B cell (primary cell): ENCODE measurements at regions of chr3 and their contacts with region 1.

Region 1: GRCh38 chr3:41961750-41962679 is at the start of gene ULK4:
- DNase-seq: peak; percentile 99
- ATAC-seq: peak; percentile 87
- H3K4me3 ChIP-seq: peak within 1 kb of the TSS; percentile 75 to 92 (median 88)
- H3K4me3 Mint-ChIP-seq: peak within 1 kb of the TSS; percentile 98
- H3K27ac ChIP-seq: peak within 1 kb of the TSS; percentile 90 to 99
- H3K27ac Mint-ChIP-seq: peak within 1 kb of the TSS; percentile 99
- H3K4me1 ChIP-seq: peaks cover 10 to 16% of the 10 kb centered on the region in 2 donors
- H3K4me1 Mint-ChIP-seq: peaks cover 19% of the 10 kb centered on the region
- H3K27me3 ChIP-seq: no peaks in the 10 kb centered on the region
- H3K27me3 Mint-ChIP-seq: no peaks in the 10 kb centered on the region
- CTCF ChIP-seq: no peak
- total RNA-seq, gene ULK4: 27.2 and 33.7 TPM in 2 replicates

Region 2: GRCh38 chr3:40524568-40525285 is 1437.3 kb before region 1 on chr3 and contains the start of gene ZNF621:
- CTCF ChIA-PET with region 1: no interaction called
- POLR2A ChIA-PET with region 1: no interaction called
- intact Hi-C with region 1: loop called (anchors 1 kb)
- DNase-seq: peak; percentile 89
- ATAC-seq: peak; percentile 99
- H3K4me3 ChIP-seq: peak within 1 kb of the TSS; percentile 27 to 94 (median 87)
- H3K4me3 Mint-ChIP-seq: peak within 1 kb of the TSS; percentile 96
- H3K27ac ChIP-seq: peak within 1 kb of the TSS; percentile 86 to 91
- H3K27ac Mint-ChIP-seq: peak within 1 kb of the TSS; percentile 94
- H3K4me1 ChIP-seq: peaks cover 16% of the 10 kb centered on the region in 2 donors
- H3K4me1 Mint-ChIP-seq: peaks cover 24% of the 10 kb centered on the region
- H3K27me3 ChIP-seq: no peaks in the 10 kb centered on the region
- H3K27me3 Mint-ChIP-seq: no peaks in the 10 kb centered on the region
- CTCF ChIP-seq: no peak
- total RNA-seq, gene ZNF621: 34.6 and 35.2 TPM in 2 replicates

Region 3: DNA sequence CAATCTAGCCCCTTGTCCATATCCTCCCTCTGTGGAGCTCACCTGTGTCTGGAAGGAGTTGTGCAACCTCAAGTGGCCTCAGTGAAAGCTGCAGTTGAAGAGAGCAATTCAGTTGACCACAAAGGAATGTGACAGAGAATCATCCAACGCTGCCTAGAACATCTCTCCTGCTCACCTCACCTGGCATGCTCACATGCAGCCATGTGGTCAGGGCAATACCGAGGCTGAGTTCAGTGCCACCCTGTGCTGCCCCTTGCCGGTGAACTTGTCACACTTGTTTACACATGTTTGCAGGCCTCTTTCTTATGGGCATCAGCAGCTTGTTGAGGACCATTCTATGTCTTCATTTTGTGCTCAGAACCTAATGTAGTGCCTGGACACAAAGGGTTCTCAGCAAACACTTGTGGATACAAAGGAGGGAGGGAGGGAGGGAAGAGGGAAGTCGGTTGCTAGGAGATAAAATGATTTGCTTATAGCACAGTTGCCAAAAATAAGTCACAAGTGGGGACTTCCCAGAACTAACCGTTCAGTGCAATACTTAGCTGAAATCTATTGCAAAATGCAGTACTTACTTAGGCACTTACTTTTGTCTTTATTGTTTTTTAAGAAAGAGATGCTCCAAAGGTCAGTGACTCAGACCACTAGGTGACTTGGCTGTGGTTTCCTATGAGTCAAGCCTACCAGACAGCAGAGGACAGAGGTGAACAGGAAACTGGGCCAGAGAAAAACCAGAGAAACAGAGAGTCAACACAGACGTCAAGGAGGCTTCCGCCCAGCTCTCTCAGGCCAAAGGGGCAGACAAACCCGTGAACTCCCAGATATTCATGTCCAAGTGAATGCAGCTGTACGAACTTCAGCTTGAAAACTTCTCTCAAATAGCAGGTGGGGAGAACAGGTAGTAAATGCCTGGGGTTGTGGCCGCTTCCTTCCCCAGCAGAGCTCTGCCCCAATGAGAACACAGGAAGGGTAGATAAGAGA is 990.5 kb before region 1 on chr3:
- CTCF ChIA-PET with region 1: no interaction called
- POLR2A ChIA-PET with region 1: no interaction called
- intact Hi-C with region 1: loop called (anchors 5 kb)
- DNase-seq: peak; percentile 75
- ATAC-seq: peak; percentile 80
- H3K4me3 ChIP-seq: peak overlapping the region in 4 of 5 experiments; percentile 9 to 41 (median 22)
- H3K4me3 Mint-ChIP-seq: peak overlapping the region; percentile 69
- H3K27ac ChIP-seq: peak overlapping the region; percentile 92 to 99
- H3K27ac Mint-ChIP-seq: peak overlapping the region; percentile 88
- H3K4me1 ChIP-seq: peaks cover 51 to 56% of the 10 kb centered on the region in 2 donors
- H3K4me1 Mint-ChIP-seq: peaks cover 66% of the 10 kb centered on the region
- H3K27me3 ChIP-seq: no peaks in the 10 kb centered on the region
- H3K27me3 Mint-ChIP-seq: no peaks in the 10 kb centered on the region
- CTCF ChIP-seq: no peak

Region 4: DNA sequence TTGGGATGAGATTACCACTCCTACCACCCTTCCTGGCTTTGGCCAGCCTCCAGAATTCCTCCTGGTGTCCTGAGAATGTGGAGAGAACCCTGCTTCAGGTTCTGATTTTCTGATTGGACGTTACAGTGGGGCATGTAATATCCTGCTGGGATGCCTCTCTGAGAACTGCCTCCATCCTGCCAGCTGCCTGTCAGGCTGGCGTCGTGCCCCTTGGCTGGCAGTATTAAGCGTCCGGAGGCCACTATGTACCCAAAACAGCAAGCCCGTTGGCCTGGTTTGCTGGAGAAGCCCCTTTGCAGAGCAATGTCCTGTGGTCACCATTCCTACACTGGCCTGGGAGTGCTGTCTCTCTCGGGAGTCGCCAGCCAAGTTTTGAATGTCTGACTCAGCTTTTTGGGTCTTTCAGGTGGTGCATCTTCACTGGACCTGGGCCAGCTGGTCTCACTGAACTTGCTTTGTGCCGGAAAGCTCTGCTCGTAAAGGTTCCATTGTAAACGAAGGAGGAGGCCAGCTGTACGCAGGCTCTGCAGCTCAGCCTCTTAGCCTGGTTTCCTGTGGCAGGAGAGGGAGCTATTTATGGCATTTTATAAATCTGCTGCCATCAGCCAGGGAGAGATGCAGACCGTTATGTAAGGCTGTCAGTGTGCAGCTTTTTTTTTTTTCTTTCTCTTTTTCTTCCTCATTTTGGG is 110.0 kb after region 1 on chr3:
- CTCF ChIA-PET with region 1: no interaction called
- POLR2A ChIA-PET with region 1: interaction called, 3 read pairs
- intact Hi-C with region 1: loop called (anchors 1 kb)
- DNase-seq: peak; percentile 55
- ATAC-seq: peak; percentile 14
- H3K4me3 ChIP-seq: peak overlapping the region in 4 of 5 experiments; percentile 12 to 36 (median 30)
- H3K4me3 Mint-ChIP-seq: peak overlapping the region; percentile 78
- H3K27ac ChIP-seq: peak overlapping the region; percentile 51 to 80
- H3K27ac Mint-ChIP-seq: peak overlapping the region; percentile 82
- H3K4me1 ChIP-seq: peaks cover 66 to 79% of the 10 kb centered on the region in 2 donors
- H3K4me1 Mint-ChIP-seq: peaks cover 82% of the 10 kb centered on the region
- H3K27me3 ChIP-seq: no peaks in the 10 kb centered on the region
- H3K27me3 Mint-ChIP-seq: no peaks in the 10 kb centered on the region
- CTCF ChIP-seq: no peak

Region 5: GRCh38 chr3:42080452-42080891 is 118.5 kb after region 1 on chr3:
- CTCF ChIA-PET with region 1: interaction called, 5 read pairs
- POLR2A ChIA-PET with region 1: interaction called, 3 read pairs
- intact Hi-C with region 1: loop called (anchors 5 kb)
- DNase-seq: peak; percentile 56
- ATAC-seq: peak; percentile 93
- H3K4me3 ChIP-seq: peak overlapping the region in 1 of 5 experiments; percentile 7
- H3K4me3 Mint-ChIP-seq: peak overlapping the region; percentile 87
- H3K27ac ChIP-seq: peak overlapping the region; percentile 65 to 84
- H3K27ac Mint-ChIP-seq: peak overlapping the region; percentile 99
- H3K4me1 ChIP-seq: peaks cover 48 to 57% of the 10 kb centered on the region in 2 donors
- H3K4me1 Mint-ChIP-seq: peaks cover 77% of the 10 kb centered on the region
- H3K27me3 ChIP-seq: no peaks in the 10 kb centered on the region
- H3K27me3 Mint-ChIP-seq: no peaks in the 10 kb centered on the region
- CTCF ChIP-seq: no peak

Region 6: DNA sequence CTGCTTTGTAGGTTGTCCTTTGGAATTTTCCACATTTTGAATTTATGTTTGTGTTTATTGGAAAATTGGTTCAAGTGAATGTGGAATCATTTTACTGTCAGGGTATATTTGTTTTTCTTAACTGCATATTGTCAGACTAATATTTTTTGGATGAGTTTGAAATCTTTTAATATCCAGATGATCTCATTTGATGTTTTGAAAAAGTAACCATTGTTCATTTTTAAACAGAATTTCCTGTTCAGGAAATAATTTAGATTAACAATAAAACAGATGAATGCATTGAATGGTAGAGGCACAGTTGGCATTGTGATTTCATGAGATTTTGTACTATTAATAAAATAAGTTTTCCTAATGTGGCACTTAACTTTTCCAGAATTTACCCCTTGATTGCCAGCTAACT is 144.6 kb after region 1 on chr3:
- CTCF ChIA-PET with region 1: no interaction called
- POLR2A ChIA-PET with region 1: no interaction called
- intact Hi-C with region 1: no loop called
- DNase-seq: no peak
- ATAC-seq: no peak
- H3K4me3 ChIP-seq: no peak overlapping the region
- H3K4me3 Mint-ChIP-seq: no peak overlapping the region
- H3K27ac ChIP-seq: no peak overlapping the region
- H3K27ac Mint-ChIP-seq: no peak overlapping the region
- H3K4me1 ChIP-seq: peaks cover 4 to 11% of the 10 kb centered on the region in 2 donors
- H3K4me1 Mint-ChIP-seq: peaks cover 22% of the 10 kb centered on the region
- H3K27me3 ChIP-seq: no peaks in the 10 kb centered on the region
- H3K27me3 Mint-ChIP-seq: no peaks in the 10 kb centered on the region
- CTCF ChIP-seq: no peak

Region 7: DNA sequence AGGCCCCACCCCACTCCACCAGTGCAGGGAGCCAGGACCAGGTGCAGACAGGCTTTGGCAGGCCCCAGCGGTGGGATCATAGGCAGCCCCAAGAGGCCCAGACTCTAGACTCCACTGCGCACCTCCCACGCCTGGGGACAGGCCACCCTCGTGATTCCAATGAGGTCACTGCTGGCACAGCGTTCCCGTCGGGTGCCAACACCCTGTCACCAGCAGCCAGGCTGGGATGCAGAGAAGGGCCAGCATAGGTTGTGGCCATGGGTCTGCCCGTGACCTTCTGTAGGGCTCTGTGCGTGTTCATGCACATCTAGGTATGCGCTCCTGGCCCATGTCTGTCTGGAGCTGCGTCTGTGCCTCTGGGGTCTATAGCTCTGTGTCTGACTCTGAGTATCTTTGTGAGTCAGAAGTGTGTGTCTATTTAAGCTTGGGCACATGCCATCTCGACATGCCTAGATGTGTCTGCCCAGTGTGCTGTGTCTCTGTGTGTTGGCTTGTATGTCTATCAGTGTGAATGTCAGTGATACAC is 553.4 kb after region 1 on chr3:
- CTCF ChIA-PET with region 1: no interaction called
- POLR2A ChIA-PET with region 1: no interaction called
- intact Hi-C with region 1: no loop called
- DNase-seq: no peak
- ATAC-seq: no peak
- H3K4me3 ChIP-seq: no peak overlapping the region
- H3K4me3 Mint-ChIP-seq: no peak overlapping the region
- H3K27ac ChIP-seq: no peak overlapping the region
- H3K27ac Mint-ChIP-seq: no peak overlapping the region
- H3K4me1 ChIP-seq: peaks cover 9 to 10% of the 10 kb centered on the region in 2 donors
- H3K4me1 Mint-ChIP-seq: peaks cover 12% of the 10 kb centered on the region
- H3K27me3 ChIP-seq: peaks cover 0 to 4% (median 1%) of the 10 kb centered on the region in 4 experiments
- H3K27me3 Mint-ChIP-seq: no peaks in the 10 kb centered on the region
- CTCF ChIP-seq: no peak